ENCODE measurements at regions of chr15 and their contacts with region 1.

Region 1: GRCh38 chr15:70488002-70488605 is 275.3 kb downstream of the UACA start:
- DNase-seq: peak; percentile 67 to 82
- ATAC-seq: peak; percentile 72 to 85 (median 82)
- H3K4me3 ChIP-seq: no peak overlapping the region
- H3K27ac ChIP-seq: no peak overlapping the region
- H3K4me1 ChIP-seq: no peaks in the 10 kb centered on the region
- H3K27me3 ChIP-seq: no peaks in the 10 kb centered on the region
- CTCF ChIP-seq: peak; percentile 97

Region 2: GRCh38 chr15:69475769-69476358 is 1012.2 kb before region 1 on chr15:
- intact Hi-C with region 1: loop called (anchors 2 to 5 kb)
- DNase-seq: peak; percentile 74 to 87
- ATAC-seq: peak; percentile 86 to 94 (median 90)
- H3K4me3 ChIP-seq: no peak overlapping the region
- H3K27ac ChIP-seq: no peak overlapping the region
- H3K4me1 ChIP-seq: no peaks in the 10 kb centered on the region
- H3K27me3 ChIP-seq: no peaks in the 10 kb centered on the region
- CTCF ChIP-seq: peak; percentile 94

Region 3: GRCh38 chr15:69523010-69524001 is 964.8 kb before region 1 on chr15:
- intact Hi-C with region 1: loop called in 1 of 2 experiments (anchors 2 kb)
- DNase-seq: peak; percentile 72 to 84
- ATAC-seq: peak; percentile 74 to 86 (median 80)
- H3K4me3 ChIP-seq: no peak overlapping the region
- H3K27ac ChIP-seq: no peak overlapping the region
- H3K4me1 ChIP-seq: no peaks in the 10 kb centered on the region
- H3K27me3 ChIP-seq: no peaks in the 10 kb centered on the region
- CTCF ChIP-seq: peak; percentile 74

Region 4: GRCh38 chr15:69576035-69576526 is 912.0 kb before region 1 on chr15:
- intact Hi-C with region 1: loop called (anchors 2 to 5 kb)
- DNase-seq: peak; percentile 61 to 78
- ATAC-seq: peak; percentile 87 to 93 (median 92)
- H3K4me3 ChIP-seq: no peak overlapping the region
- H3K27ac ChIP-seq: no peak overlapping the region
- H3K4me1 ChIP-seq: no peaks in the 10 kb centered on the region
- H3K27me3 ChIP-seq: peaks cover 0 to 3% (median 0%) of the 10 kb centered on the region in 3 donors
- CTCF ChIP-seq: peak; percentile 75

Region 5: GRCh38 chr15:69729161-69729748 is 758.8 kb before region 1 on chr15:
- intact Hi-C with region 1: loop called (anchors 5 to 10 kb)
- DNase-seq: no peak
- ATAC-seq: no peak
- H3K4me3 ChIP-seq: no peak overlapping the region
- H3K27ac ChIP-seq: no peak overlapping the region
- H3K4me1 ChIP-seq: peaks cover under 1% of the 10 kb centered on the region
- H3K27me3 ChIP-seq: peaks cover 0 to 1% (median 0%) of the 10 kb centered on the region in 3 donors
- CTCF ChIP-seq: peak; percentile 67